HEK293 (cell line): ENCODE measurements at regions of chr11 and their contacts with region 1.

Region 1: GRCh38 chr11:2725368-2726300 is 25.8 kb upstream of the KCNQ1OT1 start:
- H3K4me3 ChIP-seq: no peak overlapping the region
- H3K27ac ChIP-seq: no peak overlapping the region; the same call in 1 of the 2 replicates
- H3K4me1 ChIP-seq: peaks cover 7% of the 10 kb centered on the region
- CTCF ChIP-seq: no peak

Region 2: GRCh38 chr11:2290351-2290841 is 435.2 kb before region 1 on chr11:
- CTCF ChIA-PET with region 1: no interaction called
- POLR2A ChIA-PET with region 1: no interaction called
- H3K4me3 ChIP-seq: no peak overlapping the region
- H3K27ac ChIP-seq: no peak overlapping the region
- H3K4me1 ChIP-seq: no peaks in the 10 kb centered on the region
- CTCF ChIP-seq: no peak

Region 3: DNA sequence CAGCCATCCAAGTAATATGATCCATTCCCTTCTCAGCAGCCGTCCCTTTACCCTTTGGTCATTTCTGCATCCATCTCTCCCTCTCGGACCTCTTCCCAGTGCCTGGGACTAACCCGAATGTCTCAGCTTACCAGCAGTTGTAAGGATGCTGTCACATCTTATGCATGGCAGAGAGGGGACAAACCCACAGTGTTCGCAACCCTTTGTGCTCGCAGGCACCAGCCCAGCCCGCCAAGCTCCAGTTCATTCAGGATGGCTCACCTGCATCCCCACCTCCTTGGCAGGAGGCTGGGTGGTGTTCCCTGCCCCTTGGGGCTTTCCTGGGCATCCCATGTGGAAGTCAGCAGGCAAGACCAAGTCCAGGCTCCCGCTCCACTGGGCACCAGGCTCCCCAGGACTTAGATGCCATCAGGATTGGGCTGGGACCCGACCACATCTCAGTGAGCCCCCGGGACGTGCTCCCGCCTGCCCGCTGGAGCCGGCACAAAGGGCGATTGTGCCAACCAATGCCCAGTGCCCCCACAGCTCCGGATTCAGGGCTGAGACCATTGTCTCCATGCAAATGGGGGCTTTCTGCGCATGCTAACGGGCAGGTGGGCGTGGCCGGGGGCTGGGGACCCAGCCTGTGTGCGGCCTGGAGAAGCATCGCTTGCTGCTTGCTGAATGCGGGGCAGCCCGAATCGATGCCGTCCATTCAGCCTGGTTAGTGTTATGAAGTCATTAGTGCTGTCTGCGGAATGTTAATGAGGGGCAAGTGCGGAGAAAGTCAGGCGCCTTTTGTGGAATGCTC is 134.5 kb before region 1 on chr11:
- CTCF ChIA-PET with region 1: no interaction called
- POLR2A ChIA-PET with region 1: no interaction called
- H3K4me3 ChIP-seq: no peak overlapping the region
- H3K27ac ChIP-seq: no peak overlapping the region
- H3K4me1 ChIP-seq: no peaks in the 10 kb centered on the region
- CTCF ChIP-seq: no peak

Region 4: DNA sequence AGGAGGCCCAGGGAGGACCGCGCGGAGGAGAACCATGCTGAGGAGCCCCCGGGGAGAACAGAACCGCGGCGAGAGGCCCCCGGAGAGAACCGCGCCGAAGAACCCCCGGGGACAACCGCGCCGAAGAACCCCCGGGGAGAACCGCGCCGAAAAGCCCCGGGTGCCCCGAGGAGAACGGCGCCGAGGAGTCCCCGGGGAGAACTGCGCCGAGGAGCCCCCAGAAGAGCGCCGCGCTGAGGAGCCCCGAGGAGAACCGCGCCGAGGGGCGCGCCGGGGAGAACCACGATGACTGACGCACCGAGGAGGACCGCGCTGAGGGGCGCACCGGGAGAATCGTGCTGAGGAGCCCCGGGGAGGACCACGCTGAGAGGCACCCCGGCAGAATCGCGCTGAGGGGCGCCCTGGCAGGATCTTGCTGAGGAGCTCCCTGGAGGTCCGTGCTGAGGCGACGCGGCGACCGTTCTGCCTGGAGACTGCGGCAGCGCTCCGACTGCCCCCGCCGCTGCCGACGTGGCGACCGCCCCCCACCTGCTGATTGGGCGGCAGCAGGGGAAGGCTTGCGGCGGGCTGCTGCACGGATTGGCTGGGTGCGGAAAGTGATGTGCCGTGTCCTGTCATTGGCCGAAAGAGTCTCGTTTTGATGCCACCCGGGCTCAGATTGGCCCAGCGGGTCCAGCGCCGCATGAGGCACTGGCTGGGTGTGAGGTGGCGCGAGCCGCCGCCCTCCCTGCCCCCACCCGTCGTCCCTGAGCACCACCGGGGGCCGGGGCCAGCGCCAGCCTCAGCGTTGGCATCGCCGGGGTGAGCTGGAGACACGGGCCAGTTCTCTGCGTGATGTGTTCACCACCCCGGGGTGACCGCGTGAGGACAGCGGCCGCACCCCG is 25.9 kb before region 1 on chr11 and contains the start of gene KCNQ1OT1:
- CTCF ChIA-PET with region 1: no interaction called
- POLR2A ChIA-PET with region 1: interaction called, 13 read pairs
- H3K4me3 ChIP-seq: peak within 1 kb of the TSS; percentile 76
- H3K27ac ChIP-seq: peak within 1 kb of the TSS; percentile 75; the same call in 1 of the 2 replicates
- H3K4me1 ChIP-seq: no peaks in the 10 kb centered on the region
- CTCF ChIP-seq: no peak